ENCODE measurements at regions of chr5 and their contacts with region 1.

Region 1: DNA sequence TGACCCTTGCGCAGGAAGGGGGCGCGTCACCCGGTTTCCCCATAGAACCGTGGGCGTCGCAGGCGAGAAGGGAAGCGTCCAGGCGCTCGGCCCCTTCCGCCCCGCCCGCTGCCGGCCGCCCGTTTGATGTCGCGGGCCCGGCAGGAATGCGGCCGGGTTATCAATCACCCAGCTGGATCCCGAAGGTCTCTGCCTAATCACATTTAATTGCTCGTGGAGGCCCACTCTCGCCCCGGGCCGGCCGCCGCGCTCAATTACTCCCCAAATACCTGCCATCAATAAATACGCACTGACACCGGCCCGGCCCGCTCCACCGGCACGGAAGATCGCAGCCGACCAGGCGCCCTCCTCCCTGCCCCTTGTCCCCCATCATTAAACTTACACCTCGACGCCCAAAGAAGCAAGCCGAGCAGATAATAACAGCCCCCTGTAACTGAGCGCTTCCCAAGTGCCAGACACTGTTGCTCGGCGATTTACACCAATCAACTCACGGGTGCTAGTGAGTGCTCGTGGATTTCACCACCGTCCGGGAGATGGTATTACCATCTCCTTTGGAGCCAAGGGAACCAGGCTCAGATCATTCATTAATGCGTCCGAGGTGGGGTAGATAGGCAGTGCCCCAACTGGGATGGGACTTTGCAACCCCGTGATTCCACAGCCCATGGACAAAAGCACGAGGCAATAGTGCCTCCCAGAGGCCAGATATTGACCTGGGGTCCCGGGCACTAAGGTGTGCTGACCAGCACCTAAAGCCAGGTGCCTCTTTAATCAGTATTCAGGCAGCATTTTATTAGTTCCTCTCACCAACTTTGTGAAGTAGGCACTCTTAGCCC is 11.3 kb downstream of the MSX2 start:
- DNase-seq: no peak
- H3K4me3 ChIP-seq: peak overlapping the region in 1 of 4 donors; percentile 7
- H3K27ac ChIP-seq: no peak overlapping the region
- H3K4me1 ChIP-seq: peaks cover 0 to 21% (median 20%) of the 10 kb centered on the region in 4 donors
- H3K27me3 ChIP-seq: peaks cover 17 to 73% (median 62%) of the 10 kb centered on the region in 3 donors
- CTCF ChIP-seq: peak in 1 of 4 experiments; percentile 24
- EP300 ChIP-seq: no peak
- POLR2A ChIP-seq: no peak

Region 2: DNA sequence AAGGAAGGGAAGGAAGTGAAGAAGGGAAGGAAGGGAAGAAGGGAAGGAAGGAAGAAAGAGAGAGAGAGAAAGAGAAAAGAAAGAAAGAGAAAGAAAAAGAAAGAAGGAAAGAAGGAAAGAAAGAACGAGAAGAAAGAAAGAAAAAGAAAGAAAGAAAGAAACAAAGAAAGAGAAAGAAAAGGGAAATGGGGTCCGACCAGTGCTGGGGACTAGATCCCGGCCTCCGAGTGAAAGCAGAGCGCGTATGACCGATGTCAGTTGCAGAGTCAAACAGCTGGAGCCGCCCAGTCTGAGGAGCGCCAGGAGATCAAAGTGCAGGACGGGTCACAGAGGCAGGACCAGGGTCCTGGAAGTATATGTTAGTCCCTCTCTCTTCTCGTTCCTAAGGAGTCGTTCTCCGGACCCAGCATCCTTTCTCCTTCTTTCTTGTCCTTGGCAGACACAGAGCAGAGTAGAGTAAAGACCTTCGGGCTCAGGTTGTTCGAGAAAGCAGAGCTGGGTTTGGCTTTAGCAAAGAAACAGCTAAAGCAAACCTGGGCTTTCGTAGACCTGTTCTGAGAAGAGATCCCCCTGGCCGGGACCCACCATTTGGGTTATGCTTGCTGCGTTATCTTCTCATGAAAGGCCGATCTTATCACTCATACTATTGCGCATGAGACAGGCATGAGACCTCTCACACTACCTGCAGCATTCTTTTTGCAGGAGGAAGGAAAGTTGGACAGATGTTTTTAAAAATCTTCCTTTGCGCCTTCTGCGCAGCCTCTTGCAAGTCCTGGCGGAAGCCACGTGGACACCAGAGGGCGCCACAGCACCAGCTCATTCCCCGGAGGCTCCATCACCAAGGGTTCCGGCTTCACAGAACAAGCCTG is 316.6 kb before region 1 on chr5:
- intact Hi-C with region 1: loop called (anchors 1 kb)
- DNase-seq: peak; percentile 89
- H3K4me3 ChIP-seq: peak overlapping the region in 1 of 4 donors; percentile 10
- H3K27ac ChIP-seq: no peak overlapping the region
- H3K4me1 ChIP-seq: peaks cover 0 to 8% (median 6%) of the 10 kb centered on the region in 4 donors
- H3K27me3 ChIP-seq: peaks cover 0 to 34% (median 5%) of the 10 kb centered on the region in 3 donors
- CTCF ChIP-seq: peak; percentile 28 to 84 (median 68)
- EP300 ChIP-seq: no peak
- POLR2A ChIP-seq: no peak